PC-9 (cell line): ENCODE measurements at regions of chr10 and their contacts with region 1.

Region 1: DNA sequence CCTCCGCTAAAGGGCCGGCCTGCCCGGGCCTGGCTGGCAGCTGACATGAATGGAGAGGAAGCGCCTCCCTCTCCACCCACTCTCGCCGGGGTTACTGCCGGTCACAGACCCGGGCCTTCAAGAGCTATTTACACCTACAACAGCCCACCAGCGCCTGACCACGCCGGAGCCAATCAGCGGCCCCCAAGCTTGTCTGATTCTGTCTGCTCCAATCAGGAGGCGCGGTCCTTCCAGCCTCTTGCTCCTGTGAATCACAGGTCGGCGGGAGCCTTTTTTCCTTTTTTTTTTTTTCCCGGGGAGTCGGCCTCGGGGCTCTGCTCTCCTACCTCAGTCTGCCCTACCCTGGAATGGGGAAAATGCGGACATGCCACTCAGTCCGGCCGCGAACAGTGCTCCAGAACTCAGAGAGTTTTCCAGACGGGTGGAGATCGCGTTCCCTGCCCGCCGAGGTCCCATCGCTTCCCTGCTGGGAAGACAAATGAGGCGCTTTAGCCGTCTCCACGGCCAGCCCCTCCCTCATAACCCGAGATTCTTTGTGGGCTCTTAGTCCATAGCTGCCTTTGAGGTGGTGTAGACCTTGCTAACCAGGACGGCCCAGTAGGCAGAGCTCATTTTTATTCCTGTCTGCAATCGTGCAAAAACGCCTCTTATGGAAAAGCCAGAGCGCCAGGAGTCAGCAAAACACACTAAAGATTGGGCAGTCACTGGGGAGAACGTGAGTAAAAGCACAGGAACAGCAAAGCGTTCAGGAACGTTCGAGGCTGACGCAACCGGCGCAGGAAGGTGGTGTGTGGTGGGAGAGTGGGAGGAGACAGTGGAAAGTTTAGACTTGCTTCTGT is 26.5 kb downstream of the SCD start:
- DNase-seq: peak; percentile 95 to 98
- H3K4me3 ChIP-seq: peak overlapping the region; percentile 88
- H3K27ac ChIP-seq: peak overlapping the region; percentile 100
- H3K4me1 ChIP-seq: peaks cover 59% of the 10 kb centered on the region
- H3K27me3 ChIP-seq: no peaks in the 10 kb centered on the region
- CTCF ChIP-seq: no peak

Region 2: GRCh38 chr10:100338434-100339036 is 35.0 kb before region 1 on chr10:
- CTCF ChIA-PET with region 1: interaction called, 5 read pairs
- POLR2A ChIA-PET with region 1: interaction called, 9 read pairs
- intact Hi-C with region 1: loop called (anchors 5 kb)
- DNase-seq: peak in 1 of 2 experiments; percentile 66
- H3K4me3 ChIP-seq: no peak overlapping the region
- H3K27ac ChIP-seq: no peak overlapping the region
- H3K4me1 ChIP-seq: 0 out of 2 replicates have a peak, but pooled peaks cover 7% of the 10 kb centered on the region
- H3K27me3 ChIP-seq: peaks cover 19% of the 10 kb centered on the region
- CTCF ChIP-seq: peak; percentile 84

Region 3: GRCh38 chr10:100346765-100347567 is 26.6 kb before region 1 on chr10 and contains the start of gene SCD:
- CTCF ChIA-PET with region 1: interaction called, 13 read pairs
- POLR2A ChIA-PET with region 1: interaction called, 132 read pairs
- intact Hi-C with region 1: loop called (anchors 1 kb)
- DNase-seq: peak; percentile 84 to 86
- H3K4me3 ChIP-seq: peak within 1 kb of the TSS; percentile 84
- H3K27ac ChIP-seq: peak within 1 kb of the TSS; percentile 73
- H3K4me1 ChIP-seq: peaks cover 49% of the 10 kb centered on the region
- H3K27me3 ChIP-seq: no peaks in the 10 kb centered on the region
- CTCF ChIP-seq: no peak
- total RNA-seq, gene SCD: 220 and 518 TPM in 2 replicates

Region 4: GRCh38 chr10:100878291-100878910 is 504.9 kb after region 1 on chr10:
- CTCF ChIA-PET with region 1: no interaction called
- POLR2A ChIA-PET with region 1: interaction called, 15 read pairs
- intact Hi-C with region 1: no loop called
- DNase-seq: peak; percentile 43 to 46
- H3K4me3 ChIP-seq: no peak overlapping the region
- H3K27ac ChIP-seq: no peak overlapping the region
- H3K4me1 ChIP-seq: no peaks in the 10 kb centered on the region
- H3K27me3 ChIP-seq: 0 out of 2 replicates have a peak, but pooled peaks cover 8% of the 10 kb centered on the region
- CTCF ChIP-seq: peak; percentile 71

Region 5: GRCh38 chr10:101367569-101368453 is 994.3 kb after region 1 on chr10:
- CTCF ChIA-PET with region 1: no interaction called
- POLR2A ChIA-PET with region 1: interaction called, 11 read pairs
- intact Hi-C with region 1: no loop called
- DNase-seq: peak; percentile 58 to 92
- H3K4me3 ChIP-seq: no peak overlapping the region; the same call in 1 of the 2 replicates
- H3K27ac ChIP-seq: peak overlapping the region; percentile 53
- H3K4me1 ChIP-seq: peaks cover 7% of the 10 kb centered on the region; the same call in 1 of the 2 replicates
- H3K27me3 ChIP-seq: no peaks in the 10 kb centered on the region
- CTCF ChIP-seq: no peak

Region 6: DNA sequence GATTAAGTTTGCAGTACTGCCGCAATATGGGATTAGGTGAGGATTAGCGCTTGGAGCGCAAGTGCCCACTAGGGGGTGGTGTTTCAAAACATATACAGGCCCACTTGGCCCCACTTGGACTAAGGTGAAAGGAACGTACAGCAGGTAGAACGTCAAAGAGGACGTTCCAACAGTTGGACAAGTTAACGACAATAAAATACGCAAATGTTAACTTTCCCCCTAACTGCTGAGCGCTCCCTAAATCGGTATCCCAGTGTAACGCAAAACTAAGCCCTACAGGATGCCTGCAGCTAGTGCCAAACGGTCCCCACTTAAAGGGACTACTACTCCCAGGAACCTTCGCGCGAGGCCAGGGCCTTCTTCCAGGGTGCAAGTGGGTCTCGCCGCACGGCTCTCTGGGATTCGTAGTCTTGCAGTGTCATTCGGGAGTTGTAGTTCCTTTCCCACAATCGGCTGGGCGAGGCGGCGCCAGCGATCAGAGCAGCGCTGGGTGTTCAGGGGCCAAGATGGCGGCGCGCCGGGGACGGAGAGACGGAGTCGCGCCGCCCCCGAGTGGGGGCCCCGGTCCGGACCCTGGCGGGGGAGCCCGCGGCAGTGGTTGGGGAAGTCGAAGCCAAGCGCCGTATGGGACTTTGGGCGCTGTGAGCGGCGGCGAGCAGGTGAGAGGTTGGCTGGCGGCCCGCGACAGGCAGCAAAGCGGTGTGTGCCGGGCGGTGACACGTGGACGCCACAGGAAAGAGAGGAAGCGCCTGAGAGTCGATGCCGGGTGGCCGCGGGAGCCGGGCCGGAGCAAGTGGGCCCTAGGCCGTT is 1759.3 kb after region 1 on chr10 and contains the start of gene PPRC1:
- CTCF ChIA-PET with region 1: no interaction called
- POLR2A ChIA-PET with region 1: interaction called, 11 read pairs
- intact Hi-C with region 1: no loop called
- DNase-seq: peak; percentile 91 to 92
- H3K4me3 ChIP-seq: peak within 1 kb of the TSS; percentile 87
- H3K27ac ChIP-seq: peak within 1 kb of the TSS; percentile 89
- H3K4me1 ChIP-seq: peaks cover 26% of the 10 kb centered on the region
- H3K27me3 ChIP-seq: no peaks in the 10 kb centered on the region
- CTCF ChIP-seq: peak; percentile 83
- total RNA-seq, gene PPRC1: 22.9 and 25.1 TPM in 2 replicates